Activated naive CD4-positive, alpha-beta T cell treated with anti-CD3 and anti-CD28 coated beads, Interleukin-2, amount 10 ng/mL, durations not matched to agents 7 days and 5 days (primary cell): ENCODE measurements at regions of chr7 and their contacts with region 1.

Region 1: GRCh38 chr7:104862719-104863118 is 151.3 kb upstream of the KMT2E start:
- DNase-seq: no peak
- H3K4me3 Mint-ChIP-seq: no peak overlapping the region
- H3K27ac Mint-ChIP-seq: no peak overlapping the region
- H3K4me1 Mint-ChIP-seq: peaks cover 10% of the 10 kb centered on the region
- H3K27me3 Mint-ChIP-seq: peaks cover 28% of the 10 kb centered on the region

Region 2: DNA sequence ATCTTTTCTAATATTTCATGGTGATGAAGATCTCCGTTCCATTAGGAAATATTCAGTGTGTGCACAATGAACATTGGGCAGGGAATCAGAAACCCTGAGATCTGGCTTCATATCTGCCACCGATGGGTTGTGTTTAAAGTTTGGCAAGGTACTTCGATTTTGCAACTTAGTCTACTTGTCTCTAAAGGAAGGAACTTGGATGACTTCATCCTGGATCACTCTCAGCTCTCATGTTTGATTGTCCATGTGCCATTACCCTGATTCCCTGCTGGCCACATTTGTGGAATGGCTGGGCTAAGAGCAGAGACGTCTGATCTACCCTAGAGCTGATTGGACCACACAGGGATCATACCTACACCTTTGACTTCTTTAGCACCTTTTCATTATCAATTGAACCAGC is 25.7 kb before region 1 on chr7:
- CTCF ChIA-PET with region 1: no interaction called
- DNase-seq: no peak
- H3K4me3 Mint-ChIP-seq: no peak overlapping the region
- H3K27ac Mint-ChIP-seq: no peak overlapping the region
- H3K4me1 Mint-ChIP-seq: no peaks in the 10 kb centered on the region
- H3K27me3 Mint-ChIP-seq: peaks cover 9% of the 10 kb centered on the region

Region 3: GRCh38 chr7:104848138-104848990 is 14.4 kb before region 1 on chr7:
- CTCF ChIA-PET with region 1: interaction called, 19 read pairs
- DNase-seq: peak; percentile 62
- H3K4me3 Mint-ChIP-seq: no peak overlapping the region
- H3K27ac Mint-ChIP-seq: no peak overlapping the region
- H3K4me1 Mint-ChIP-seq: no peaks in the 10 kb centered on the region
- H3K27me3 Mint-ChIP-seq: peaks cover 41% of the 10 kb centered on the region

Region 4: DNA sequence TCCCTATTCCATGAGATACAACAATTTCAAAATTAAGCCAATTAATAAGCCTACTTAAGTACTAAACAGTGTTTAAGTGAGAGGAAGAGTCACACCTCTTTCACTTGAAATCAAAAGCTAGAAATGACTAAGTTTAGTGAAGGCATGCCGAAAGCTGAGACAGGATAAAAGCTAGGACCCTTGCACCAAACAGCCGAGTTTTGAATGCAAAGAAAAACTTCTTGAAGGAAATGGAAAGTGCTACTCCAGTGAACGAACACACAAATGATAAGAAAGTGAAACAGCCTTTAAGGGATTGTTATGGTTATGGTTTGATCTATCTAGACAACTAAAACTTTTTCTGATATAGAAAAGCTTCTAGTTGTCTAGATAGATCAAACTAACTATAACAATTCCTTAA is 15.9 kb after region 1 on chr7:
- CTCF ChIA-PET with region 1: interaction called, 20 read pairs
- DNase-seq: no peak
- H3K4me3 Mint-ChIP-seq: no peak overlapping the region
- H3K27ac Mint-ChIP-seq: peak overlapping the region; percentile 43
- H3K4me1 Mint-ChIP-seq: peaks cover 22% of the 10 kb centered on the region
- H3K27me3 Mint-ChIP-seq: no peaks in the 10 kb centered on the region

Region 5: DNA sequence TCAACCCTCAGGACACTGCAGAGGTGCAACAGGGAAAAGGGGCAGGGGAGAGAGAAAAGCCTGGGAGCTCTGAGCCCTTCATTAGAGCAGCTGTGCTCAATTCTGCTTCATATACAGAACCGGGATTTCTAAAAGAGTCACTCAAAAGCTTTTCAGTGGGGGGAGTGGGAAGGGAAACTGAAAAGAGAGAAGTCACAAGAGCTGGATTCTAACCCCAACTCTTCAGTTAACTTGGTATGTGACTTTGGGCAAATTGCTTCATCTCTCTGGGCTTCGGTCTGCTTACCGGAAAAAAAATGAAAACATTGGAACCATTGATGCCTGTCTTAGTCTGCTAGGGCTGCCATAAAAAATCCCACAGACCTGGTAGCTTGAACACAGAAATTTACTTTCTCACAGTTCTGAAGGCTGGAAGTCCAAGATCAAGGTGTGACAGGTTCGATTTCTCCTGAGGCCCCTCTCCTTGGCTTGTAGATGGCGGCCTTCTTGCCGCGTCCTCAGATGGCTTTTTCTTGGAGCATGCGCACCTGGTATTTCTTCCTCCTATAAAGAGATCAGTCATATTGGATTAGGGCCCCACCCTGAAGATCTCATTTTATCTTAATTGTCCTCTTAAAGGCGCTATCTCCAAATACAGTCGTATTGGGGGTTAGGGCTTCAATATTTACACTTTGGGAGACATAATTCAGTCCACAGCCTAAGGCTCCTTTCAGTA is 33.0 kb after region 1 on chr7:
- CTCF ChIA-PET with region 1: no interaction called
- DNase-seq: no peak
- H3K4me3 Mint-ChIP-seq: no peak overlapping the region
- H3K27ac Mint-ChIP-seq: no peak overlapping the region
- H3K4me1 Mint-ChIP-seq: peaks cover 7% of the 10 kb centered on the region
- H3K27me3 Mint-ChIP-seq: no peaks in the 10 kb centered on the region

Region 6: DNA sequence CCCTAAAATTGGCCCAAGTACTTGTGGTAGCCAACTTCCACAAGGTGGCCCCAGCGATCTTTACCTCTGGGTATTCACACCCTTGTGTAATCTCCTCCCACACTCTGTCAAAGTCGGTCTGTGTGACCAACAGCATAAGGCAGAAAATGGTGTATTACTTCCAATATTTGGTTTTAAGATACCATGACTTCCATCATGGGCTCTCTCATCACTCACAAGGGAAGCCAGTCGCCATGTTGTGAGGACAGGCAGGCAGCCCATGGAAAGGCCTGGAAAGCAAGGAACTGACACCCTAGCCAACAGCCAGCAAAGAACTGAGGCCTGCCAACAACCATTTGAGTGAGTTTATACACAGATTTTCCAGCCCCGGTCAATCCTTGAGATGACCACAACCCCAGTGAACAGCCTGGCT is 60.3 kb after region 1 on chr7:
- CTCF ChIA-PET with region 1: interaction called, 12 read pairs
- DNase-seq: peak; percentile 83
- H3K4me3 Mint-ChIP-seq: no peak overlapping the region
- H3K27ac Mint-ChIP-seq: no peak overlapping the region
- H3K4me1 Mint-ChIP-seq: peaks cover 4% of the 10 kb centered on the region
- H3K27me3 Mint-ChIP-seq: peaks cover 2% of the 10 kb centered on the region

Region 7: GRCh38 chr7:105028004-105028403 is 165.3 kb after region 1 on chr7:
- CTCF ChIA-PET with region 1: no interaction called
- DNase-seq: no peak
- H3K4me3 Mint-ChIP-seq: no peak overlapping the region
- H3K27ac Mint-ChIP-seq: no peak overlapping the region
- H3K4me1 Mint-ChIP-seq: peaks cover 48% of the 10 kb centered on the region
- H3K27me3 Mint-ChIP-seq: no peaks in the 10 kb centered on the region